SK-N-SH (cell line): ENCODE measurements at regions of chr17 and their contacts with region 1.

Region 1: DNA sequence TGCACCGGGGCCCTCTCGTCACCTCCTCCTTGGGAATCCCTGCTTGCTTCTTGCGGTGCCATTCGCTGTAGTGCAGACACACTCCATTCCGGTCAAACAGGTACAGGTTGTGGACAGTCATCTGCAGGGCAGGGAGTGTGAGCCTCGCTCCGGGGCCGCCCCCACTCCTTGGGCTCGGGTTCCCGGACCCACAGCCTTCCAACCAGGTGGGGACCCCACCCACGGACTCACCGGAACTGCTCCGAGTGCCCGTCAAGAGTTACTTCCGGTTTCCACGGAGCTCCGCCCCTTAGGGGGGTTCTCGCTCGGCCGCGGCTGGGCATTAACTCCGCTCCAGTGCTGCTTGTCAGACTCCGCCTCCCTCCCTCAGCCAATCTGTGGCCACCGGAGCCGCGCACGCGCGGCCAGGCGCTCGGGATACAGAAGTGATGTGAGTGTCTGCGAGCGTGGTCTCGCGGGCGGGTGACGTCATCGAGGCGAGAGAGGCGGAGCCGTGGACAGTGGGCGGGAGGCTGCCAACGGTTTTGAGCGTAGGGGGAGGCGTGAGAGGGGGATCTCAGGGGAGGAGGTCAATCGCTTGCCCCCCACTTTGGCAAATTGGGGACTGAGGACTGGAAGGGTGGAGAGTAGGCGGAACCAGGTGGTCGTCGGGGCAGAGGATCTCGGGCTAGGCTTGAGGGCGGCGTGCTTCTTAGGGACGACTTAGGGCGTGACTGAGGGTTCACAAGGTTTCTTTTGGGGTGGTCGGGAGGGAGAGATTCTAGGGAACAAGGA is at the starts of genes CNTROB and TRAPPC1:
- DNase-seq: peak; percentile 98
- H3K4me3 ChIP-seq: peak within 1 kb of the TSS; percentile 99 to 100
- H3K27ac ChIP-seq: peak within 1 kb of the TSS; percentile 75 to 87
- H3K4me1 ChIP-seq: peaks cover 21 to 38% of the 10 kb centered on the region in 2 experiments; a peak in 3 of 4 replicates
- H3K27me3 ChIP-seq: no peaks in the 10 kb centered on the region
- CTCF ChIP-seq: no peak
- EP300 ChIP-seq: no peak
- RAD21 ChIP-seq: no peak
- polyA plus RNA-seq, gene CNTROB: 26.3 and 27.4 TPM in 2 replicates
- polyA plus RNA-seq, gene TRAPPC1: 390 and 555 TPM in 2 replicates

Region 2: GRCh38 chr17:7845359-7846064 is 86.4 kb before region 1 on chr17:
- CTCF ChIA-PET with region 1: no interaction called
- POLR2A ChIA-PET with region 1: no interaction called
- DNase-seq: no peak
- H3K4me3 ChIP-seq: peak overlapping the region; percentile 66 to 67
- H3K27ac ChIP-seq: peak overlapping the region; percentile 75 to 100
- H3K4me1 ChIP-seq: peaks cover 16 to 22% of the 10 kb centered on the region in 2 experiments
- H3K27me3 ChIP-seq: no peaks in the 10 kb centered on the region
- CTCF ChIP-seq: no peak
- EP300 ChIP-seq: no peak
- RAD21 ChIP-seq: no peak

Region 3: DNA sequence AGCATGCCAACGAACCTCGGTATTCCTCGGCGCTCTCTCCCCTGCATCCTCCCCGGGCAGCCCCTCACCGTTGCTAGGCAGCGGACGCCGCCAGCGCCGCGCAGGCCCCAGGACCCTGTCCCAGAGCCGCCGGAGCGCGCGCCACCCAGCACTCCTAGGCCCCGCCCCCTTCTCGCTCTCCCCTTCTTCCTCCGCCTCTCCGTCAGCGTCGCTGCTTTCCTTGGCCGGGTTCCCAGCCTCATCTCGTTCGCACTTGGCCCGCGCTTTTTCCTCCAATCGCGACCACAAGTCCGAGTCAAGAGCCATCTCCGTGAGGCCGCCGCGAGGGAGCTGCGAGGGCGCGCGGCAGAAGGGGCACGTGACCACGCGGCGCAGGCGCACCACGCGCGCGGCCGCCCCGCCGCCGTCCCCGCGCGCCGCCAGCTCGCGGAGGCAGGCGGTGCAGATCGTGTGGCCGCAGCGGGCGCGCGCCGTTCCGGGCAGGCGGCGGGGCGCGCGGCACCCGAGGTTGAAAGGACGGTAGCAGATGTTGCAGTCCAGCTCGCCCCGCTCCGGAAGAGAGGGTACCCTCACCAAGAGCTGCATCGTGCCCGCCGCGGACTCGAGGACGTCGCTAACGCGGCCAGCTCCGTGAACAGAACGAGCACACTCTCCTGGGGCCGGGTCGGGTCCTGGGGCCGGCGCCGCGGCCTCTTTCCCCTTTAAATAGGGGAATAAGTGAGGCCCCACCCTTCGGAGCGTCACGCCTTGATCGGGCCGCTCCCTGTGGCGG is 16.1 kb before region 1 on chr17 and contains the start of gene RNF227:
- CTCF ChIA-PET with region 1: interaction called, 13 read pairs
- POLR2A ChIA-PET with region 1: interaction called, 8 read pairs
- DNase-seq: peak; percentile 93
- H3K4me3 ChIP-seq: peak within 1 kb of the TSS; percentile 57 to 62
- H3K27ac ChIP-seq: peak within 1 kb of the TSS; percentile 60 to 90
- H3K4me1 ChIP-seq: peaks cover 14 to 18% of the 10 kb centered on the region in 2 experiments; a peak in 2 of 4 replicates
- H3K27me3 ChIP-seq: no peaks in the 10 kb centered on the region
- CTCF ChIP-seq: no peak
- EP300 ChIP-seq: no peak
- RAD21 ChIP-seq: peak; percentile 11; the same call in 1 of the 2 replicates
- polyA plus RNA-seq, gene RNF227: 7.4 and 9.0 TPM in 2 replicates

Region 4: DNA sequence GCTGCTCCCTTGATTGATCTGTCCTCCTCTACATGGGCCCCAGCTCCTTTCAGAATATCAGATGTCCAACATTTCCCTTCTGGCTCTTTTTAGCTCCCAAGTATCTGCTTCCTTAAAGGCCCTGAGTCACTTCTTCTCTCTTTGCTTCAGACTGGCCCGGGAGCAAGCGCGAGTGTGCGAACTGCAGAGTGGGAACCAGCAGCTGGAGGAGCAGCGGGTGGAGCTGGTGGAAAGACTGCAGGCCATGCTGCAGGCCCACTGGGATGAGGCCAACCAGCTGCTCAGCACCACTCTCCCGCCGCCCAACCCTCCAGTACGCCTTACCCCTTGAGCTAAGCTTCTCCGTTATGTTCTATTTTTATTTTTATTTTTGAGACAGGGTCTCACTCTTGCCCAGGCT is 12.4 kb after region 1 on chr17:
- CTCF ChIA-PET with region 1: interaction called, 6 read pairs
- POLR2A ChIA-PET with region 1: interaction called, 11 read pairs
- DNase-seq: no peak
- H3K4me3 ChIP-seq: no peak overlapping the region
- H3K27ac ChIP-seq: no peak overlapping the region
- H3K4me1 ChIP-seq: no peaks in the 10 kb centered on the region
- H3K27me3 ChIP-seq: no peaks in the 10 kb centered on the region
- CTCF ChIP-seq: no peak
- EP300 ChIP-seq: no peak
- RAD21 ChIP-seq: no peak

Region 5: GRCh38 chr17:8091033-8091687 is 159.3 kb after region 1 on chr17:
- CTCF ChIA-PET with region 1: no interaction called
- POLR2A ChIA-PET with region 1: no interaction called
- DNase-seq: no peak
- H3K4me3 ChIP-seq: no peak overlapping the region
- H3K27ac ChIP-seq: no peak overlapping the region
- H3K4me1 ChIP-seq: no peaks in the 10 kb centered on the region
- H3K27me3 ChIP-seq: peaks cover 62% of the 10 kb centered on the region; the same call in 1 of the 2 replicates
- CTCF ChIP-seq: no peak
- EP300 ChIP-seq: no peak
- RAD21 ChIP-seq: no peak

Region 6: GRCh38 chr17:8125157-8125946 is 193.5 kb after region 1 on chr17:
- CTCF ChIA-PET with region 1: no interaction called
- POLR2A ChIA-PET with region 1: no interaction called
- DNase-seq: peak; percentile 88
- H3K4me3 ChIP-seq: peak overlapping the region; percentile 53 to 81
- H3K27ac ChIP-seq: peak overlapping the region; percentile 17 to 54; a peak in 2 of 4 replicates
- H3K4me1 ChIP-seq: peaks cover 0 to 32% of the 10 kb centered on the region in 2 experiments; a peak in 1 of 4 replicates
- H3K27me3 ChIP-seq: no peaks in the 10 kb centered on the region; the same call in 1 of the 2 replicates
- CTCF ChIP-seq: no peak
- EP300 ChIP-seq: no peak
- RAD21 ChIP-seq: no peak